ENCODE measurements at regions of chr4 and their contacts with region 1.

Region 1: GRCh38 chr4:111985426-111985825 is 159.8 kb upstream of the FAM241A start:
- DNase-seq: no peak
- ATAC-seq: no peak
- H3K4me3 Mint-ChIP-seq: no peak overlapping the region
- H3K27ac Mint-ChIP-seq: no peak overlapping the region
- H3K4me1 Mint-ChIP-seq: no peaks in the 10 kb centered on the region
- H3K27me3 Mint-ChIP-seq: peaks cover 9% of the 10 kb centered on the region

Region 2: GRCh38 chr4:111454961-111455360 is 530.5 kb before region 1 on chr4:
- CTCF ChIA-PET with region 1: interaction called, 11 read pairs
- POLR2A ChIA-PET with region 1: no interaction called
- intact Hi-C with region 1: no loop called
- DNase-seq: no peak
- ATAC-seq: no peak
- H3K4me3 Mint-ChIP-seq: no peak overlapping the region
- H3K27ac Mint-ChIP-seq: no peak overlapping the region
- H3K4me1 Mint-ChIP-seq: no peaks in the 10 kb centered on the region
- H3K27me3 Mint-ChIP-seq: no peaks in the 10 kb centered on the region

Region 3: GRCh38 chr4:112448306-112449132 is 463.1 kb after region 1 on chr4:
- CTCF ChIA-PET with region 1: no interaction called
- POLR2A ChIA-PET with region 1: no interaction called
- intact Hi-C with region 1: no loop called
- DNase-seq: no peak
- ATAC-seq: no peak
- H3K4me3 Mint-ChIP-seq: no peak overlapping the region
- H3K27ac Mint-ChIP-seq: no peak overlapping the region
- H3K4me1 Mint-ChIP-seq: no peaks in the 10 kb centered on the region
- H3K27me3 Mint-ChIP-seq: no peaks in the 10 kb centered on the region

Measured in activated CD4-positive, alpha-beta T cell treated with anti-CD3 and anti-CD28 coated beads for 36 hours (primary cell).